GM10248 (cell line): ENCODE measurements at regions of chr20 and their contacts with region 1.

Region 1: DNA sequence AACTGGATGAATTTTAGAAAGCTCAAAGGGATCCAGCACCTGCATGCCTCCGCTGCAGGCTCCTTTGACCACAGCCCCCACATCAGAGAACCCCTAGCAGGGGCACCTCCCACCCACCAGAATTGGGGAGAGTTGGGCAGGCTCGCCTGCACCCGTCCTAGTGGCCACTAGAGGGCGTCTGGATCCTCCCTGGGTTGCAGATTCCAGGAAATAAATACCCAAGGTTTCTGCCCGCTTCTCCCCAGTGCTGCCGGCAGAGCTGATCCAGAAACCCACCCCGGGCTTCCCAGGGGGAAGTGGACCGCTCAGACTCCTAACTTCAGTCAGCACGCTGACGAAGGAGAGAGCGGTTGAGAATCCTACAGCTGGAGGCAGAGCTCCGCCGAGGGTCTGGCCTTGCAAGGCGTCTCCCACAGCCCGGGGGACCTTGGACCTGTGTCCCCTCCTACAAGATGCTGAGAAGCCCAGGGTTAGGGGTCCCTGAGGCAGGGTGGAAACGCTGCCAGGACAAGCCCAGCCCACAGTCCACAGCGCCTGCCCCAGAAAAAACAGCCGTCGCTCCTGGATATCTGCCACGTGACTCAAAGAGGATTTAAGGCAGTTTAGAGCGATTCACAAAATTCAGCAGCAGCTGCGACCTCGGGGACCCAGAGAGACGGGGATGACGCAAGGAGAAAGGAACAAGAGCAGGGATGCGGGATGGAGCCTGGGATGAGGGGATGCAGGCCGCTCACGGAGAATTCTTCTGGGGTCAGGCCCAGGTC is 32.6 kb upstream of the PHACTR3 start:
- DNase-seq: peak; percentile 82
- CTCF ChIP-seq: peak; percentile 85

Region 2: GRCh38 chr20:59547596-59547995 is 24.1 kb before region 1 on chr20:
- CTCF ChIA-PET with region 1: interaction called, 16 read pairs
- POLR2A ChIA-PET with region 1: no interaction called
- DNase-seq: no peak
- CTCF ChIP-seq: no peak

Region 3: GRCh38 chr20:59560588-59561227 is 11.0 kb before region 1 on chr20:
- CTCF ChIA-PET with region 1: interaction called, 25 read pairs
- POLR2A ChIA-PET with region 1: no interaction called
- DNase-seq: peak; percentile 57
- CTCF ChIP-seq: peak; percentile 34

Region 4: DNA sequence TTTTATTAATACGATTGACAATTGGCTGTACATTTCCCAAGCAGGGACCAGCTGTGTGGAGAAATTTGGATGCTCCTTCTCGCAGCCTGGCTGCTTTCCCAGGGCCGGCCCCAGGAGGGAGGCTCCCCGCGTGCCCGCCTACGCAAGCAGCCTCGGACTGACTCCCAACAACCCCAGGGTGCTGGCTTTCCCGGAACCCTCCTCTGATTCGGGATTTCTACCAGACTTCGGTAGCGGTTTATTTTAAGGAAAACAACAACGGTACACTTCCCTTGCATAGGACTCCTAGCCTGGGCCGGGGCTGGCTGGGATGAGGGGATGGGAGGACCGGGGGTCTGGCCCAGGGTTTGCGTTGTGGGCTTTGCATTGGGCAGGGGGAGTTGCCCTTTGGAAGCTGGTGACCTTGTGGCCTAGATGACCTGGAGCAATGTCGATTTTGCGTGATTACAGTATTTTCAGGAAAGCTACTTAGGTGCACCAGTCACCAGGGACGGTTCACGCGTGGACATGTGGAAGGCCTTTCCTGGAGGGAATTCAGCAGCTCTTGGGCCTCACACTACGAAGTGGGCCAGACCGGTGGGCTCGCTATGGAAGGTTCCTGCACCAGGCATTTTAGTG is 11.8 kb after region 1 on chr20:
- CTCF ChIA-PET with region 1: interaction called, 58 read pairs
- POLR2A ChIA-PET with region 1: no interaction called
- DNase-seq: no peak
- CTCF ChIP-seq: no peak

Region 5: GRCh38 chr20:59598625-59599310 is 27.0 kb after region 1 on chr20:
- CTCF ChIA-PET with region 1: interaction called, 21 read pairs
- POLR2A ChIA-PET with region 1: no interaction called
- DNase-seq: peak; percentile 81
- CTCF ChIP-seq: peak; percentile 90

Region 6: GRCh38 chr20:59611269-59611668 is 39.5 kb after region 1 on chr20:
- CTCF ChIA-PET with region 1: interaction called, 23 read pairs
- POLR2A ChIA-PET with region 1: no interaction called
- DNase-seq: no peak
- CTCF ChIP-seq: no peak

Region 7: DNA sequence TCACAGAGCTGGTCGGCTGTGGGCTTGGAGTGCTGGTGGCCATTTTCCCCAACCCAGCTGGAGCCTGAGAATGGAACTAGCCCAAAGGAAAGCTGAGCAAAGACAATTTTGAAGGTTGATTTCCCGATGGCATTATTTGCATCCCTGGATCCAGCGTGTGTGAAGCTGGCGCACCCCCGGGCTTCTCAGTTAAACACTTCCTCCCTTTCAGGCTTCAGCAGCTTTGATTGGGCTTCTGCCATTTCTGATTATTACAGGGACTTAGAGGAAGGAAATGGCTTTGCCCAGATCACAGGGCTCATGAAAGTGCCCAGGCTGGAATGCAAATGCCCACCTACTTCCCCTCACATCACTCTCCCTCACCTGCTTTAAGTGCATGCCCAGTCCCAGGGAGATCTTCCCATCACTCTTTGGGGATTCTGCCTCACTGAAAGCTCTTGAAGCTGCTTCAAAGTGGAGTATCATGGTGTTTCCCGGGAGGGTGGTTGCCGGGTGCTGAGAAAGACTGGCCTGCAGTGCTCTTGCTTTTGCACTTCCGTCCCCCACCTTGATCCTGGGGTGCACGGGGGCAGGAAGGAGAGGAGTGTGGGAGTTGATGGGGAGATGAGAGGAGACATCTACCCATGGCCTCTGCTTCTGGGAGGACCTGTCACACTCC is 60.9 kb after region 1 on chr20:
- CTCF ChIA-PET with region 1: no interaction called
- POLR2A ChIA-PET with region 1: no interaction called
- DNase-seq: no peak
- CTCF ChIP-seq: no peak

Region 8: DNA sequence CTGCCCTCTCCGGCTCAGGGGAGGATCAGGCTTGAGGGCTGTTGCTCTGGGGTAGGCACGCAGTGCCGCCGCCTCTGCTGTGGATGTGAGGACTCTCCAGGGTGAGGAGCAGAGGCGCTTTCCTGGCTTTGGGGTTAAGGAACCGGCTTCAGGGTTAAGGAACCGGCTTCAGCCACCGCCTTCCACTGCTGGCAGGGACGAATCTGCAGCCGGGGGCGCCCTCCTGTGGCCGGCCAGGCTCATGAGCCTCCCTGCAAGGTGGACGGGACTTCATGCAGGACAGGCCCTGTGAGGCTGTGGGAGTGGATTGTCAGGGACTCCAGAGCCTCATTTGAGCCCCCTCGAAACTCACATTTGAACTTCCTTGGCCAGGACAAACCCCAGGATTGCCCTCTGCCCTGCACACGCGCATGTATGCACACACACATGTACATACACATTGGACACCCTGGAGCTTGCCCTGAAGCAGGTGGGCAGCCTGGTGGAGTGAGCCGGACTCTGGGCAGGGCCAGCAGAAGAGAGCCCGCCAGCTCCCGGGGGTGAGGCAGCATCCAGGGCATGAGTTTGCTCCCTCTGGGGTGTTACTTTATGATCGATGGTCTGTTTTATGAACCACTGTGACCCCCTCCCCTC is 179.4 kb after region 1 on chr20:
- CTCF ChIA-PET with region 1: interaction called, 15 read pairs
- POLR2A ChIA-PET with region 1: no interaction called
- DNase-seq: peak; percentile 87
- CTCF ChIP-seq: peak; percentile 94